Activated CD8-positive, alpha-beta T cell treated with anti-CD3 and anti-CD28 coated beads for 36 hours (primary cell): ENCODE measurements at regions of chr14 and their contacts with region 1.

Region 1: GRCh38 chr14:69637503-69638030 is 26.2 kb downstream of the SUSD6 start:
- DNase-seq: no peak
- ATAC-seq: peak; percentile 11
- H3K4me3 Mint-ChIP-seq: peak overlapping the region; percentile 22
- H3K27ac Mint-ChIP-seq: peak overlapping the region; percentile 94
- H3K4me1 Mint-ChIP-seq: peaks cover 87% of the 10 kb centered on the region
- H3K27me3 Mint-ChIP-seq: no peaks in the 10 kb centered on the region
- CTCF ChIP-seq: no peak

Region 2: GRCh38 chr14:69620111-69620611 is 17.4 kb before region 1 on chr14:
- CTCF ChIA-PET with region 1: interaction called, 4 read pairs
- POLR2A ChIA-PET with region 1: interaction called, 8 read pairs
- intact Hi-C with region 1: loop called (anchors 2 kb)
- DNase-seq: peak; percentile 61
- ATAC-seq: peak; percentile 22
- H3K4me3 Mint-ChIP-seq: peak overlapping the region; percentile 31
- H3K27ac Mint-ChIP-seq: peak overlapping the region; percentile 92
- H3K4me1 Mint-ChIP-seq: peaks cover 91% of the 10 kb centered on the region
- H3K27me3 Mint-ChIP-seq: no peaks in the 10 kb centered on the region
- CTCF ChIP-seq: no peak